ENCODE measurements at regions of chrX and their contacts with region 1.

Region 1: GRCh38 chrX:109714340-109714958 is 18.6 kb downstream of the ACSL4 start:
- DNase-seq: no peak
- ATAC-seq: no peak
- H3K4me3 ChIP-seq: no peak overlapping the region
- H3K4me3 Mint-ChIP-seq: no peak overlapping the region
- H3K27ac ChIP-seq: no peak overlapping the region
- H3K27ac Mint-ChIP-seq: no peak overlapping the region
- H3K4me1 ChIP-seq: no peaks in the 10 kb centered on the region
- H3K4me1 Mint-ChIP-seq: peaks cover 6 to 46% (median 28%) of the 10 kb centered on the region in 7 donors
- H3K27me3 ChIP-seq: no peaks in the 10 kb centered on the region
- H3K27me3 Mint-ChIP-seq: no peaks in the 10 kb centered on the region

Region 2: DNA sequence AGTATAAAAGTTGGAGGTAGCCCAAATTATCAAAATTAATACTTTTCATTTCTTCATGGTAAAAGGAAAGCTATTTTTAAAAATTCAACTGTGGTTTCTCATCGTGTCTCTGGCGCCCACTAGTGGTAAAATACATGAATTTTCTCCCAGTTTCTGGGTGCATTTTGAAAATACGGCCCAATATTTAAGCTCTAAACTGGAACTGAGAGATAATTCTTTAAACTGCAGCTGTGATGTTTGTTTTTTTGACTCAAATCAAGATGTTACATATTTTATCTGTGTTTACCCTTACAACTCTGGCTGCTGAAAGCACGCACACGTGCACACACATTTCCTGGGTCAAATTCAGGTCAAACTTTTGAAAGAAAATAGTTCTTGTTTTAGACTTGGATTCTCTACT is 142.5 kb after region 1 on chrX:
- CTCF ChIA-PET with region 1: interaction called, 31 read pairs
- POLR2A ChIA-PET with region 1: no interaction called
- intact Hi-C with region 1: loop called in 1 of 2 experiments (anchors 1 kb)
- DNase-seq: peak in 6 of 9 donors; percentile 7 to 47 (median 42)
- ATAC-seq: no peak
- H3K4me3 ChIP-seq: no peak overlapping the region
- H3K4me3 Mint-ChIP-seq: peak overlapping the region in 1 of 10 donors; percentile 2
- H3K27ac ChIP-seq: no peak overlapping the region
- H3K27ac Mint-ChIP-seq: no peak overlapping the region
- H3K4me1 ChIP-seq: no peaks in the 10 kb centered on the region
- H3K4me1 Mint-ChIP-seq: peaks cover 0 to 2% (median 0%) of the 10 kb centered on the region in 7 donors
- H3K27me3 ChIP-seq: no peaks in the 10 kb centered on the region
- H3K27me3 Mint-ChIP-seq: no peaks in the 10 kb centered on the region

Region 3: GRCh38 chrX:109890895-109891502 is 176.6 kb after region 1 on chrX:
- CTCF ChIA-PET with region 1: interaction called, 14 read pairs
- POLR2A ChIA-PET with region 1: no interaction called
- intact Hi-C with region 1: loop called (anchors 1 kb)
- DNase-seq: peak in 8 of 9 donors; percentile 11 to 48 (median 40)
- ATAC-seq: peak; percentile 74
- H3K4me3 ChIP-seq: no peak overlapping the region
- H3K4me3 Mint-ChIP-seq: no peak overlapping the region
- H3K27ac ChIP-seq: no peak overlapping the region
- H3K27ac Mint-ChIP-seq: no peak overlapping the region
- H3K4me1 ChIP-seq: no peaks in the 10 kb centered on the region
- H3K4me1 Mint-ChIP-seq: peaks cover 0 to 1% (median 0%) of the 10 kb centered on the region in 7 donors
- H3K27me3 ChIP-seq: no peaks in the 10 kb centered on the region
- H3K27me3 Mint-ChIP-seq: peaks cover 0 to 6% (median 0%) of the 10 kb centered on the region in 5 donors

Region 4: GRCh38 chrX:110847334-110847733 is 1132.9 kb after region 1 on chrX:
- CTCF ChIA-PET with region 1: no interaction called
- POLR2A ChIA-PET with region 1: no interaction called
- intact Hi-C with region 1: loop called in 1 of 2 experiments (anchors 5 kb)
- DNase-seq: peak in 6 of 9 donors; percentile 15 to 53 (median 44)
- ATAC-seq: peak; percentile 61
- H3K4me3 ChIP-seq: no peak overlapping the region
- H3K4me3 Mint-ChIP-seq: no peak overlapping the region
- H3K27ac ChIP-seq: no peak overlapping the region
- H3K27ac Mint-ChIP-seq: peak overlapping the region in 1 of 9 donors; percentile 75
- H3K4me1 ChIP-seq: no peaks in the 10 kb centered on the region
- H3K4me1 Mint-ChIP-seq: peaks cover 0 to 2% (median 0%) of the 10 kb centered on the region in 7 donors
- H3K27me3 ChIP-seq: no peaks in the 10 kb centered on the region
- H3K27me3 Mint-ChIP-seq: peaks cover 0 to 5% (median 0%) of the 10 kb centered on the region in 5 donors

Measured in naive thymus-derived CD4-positive, alpha-beta T cell (primary cell).